Natural killer cell (primary cell): ENCODE measurements at regions of chr10 and their contacts with region 1.

Region 1: DNA sequence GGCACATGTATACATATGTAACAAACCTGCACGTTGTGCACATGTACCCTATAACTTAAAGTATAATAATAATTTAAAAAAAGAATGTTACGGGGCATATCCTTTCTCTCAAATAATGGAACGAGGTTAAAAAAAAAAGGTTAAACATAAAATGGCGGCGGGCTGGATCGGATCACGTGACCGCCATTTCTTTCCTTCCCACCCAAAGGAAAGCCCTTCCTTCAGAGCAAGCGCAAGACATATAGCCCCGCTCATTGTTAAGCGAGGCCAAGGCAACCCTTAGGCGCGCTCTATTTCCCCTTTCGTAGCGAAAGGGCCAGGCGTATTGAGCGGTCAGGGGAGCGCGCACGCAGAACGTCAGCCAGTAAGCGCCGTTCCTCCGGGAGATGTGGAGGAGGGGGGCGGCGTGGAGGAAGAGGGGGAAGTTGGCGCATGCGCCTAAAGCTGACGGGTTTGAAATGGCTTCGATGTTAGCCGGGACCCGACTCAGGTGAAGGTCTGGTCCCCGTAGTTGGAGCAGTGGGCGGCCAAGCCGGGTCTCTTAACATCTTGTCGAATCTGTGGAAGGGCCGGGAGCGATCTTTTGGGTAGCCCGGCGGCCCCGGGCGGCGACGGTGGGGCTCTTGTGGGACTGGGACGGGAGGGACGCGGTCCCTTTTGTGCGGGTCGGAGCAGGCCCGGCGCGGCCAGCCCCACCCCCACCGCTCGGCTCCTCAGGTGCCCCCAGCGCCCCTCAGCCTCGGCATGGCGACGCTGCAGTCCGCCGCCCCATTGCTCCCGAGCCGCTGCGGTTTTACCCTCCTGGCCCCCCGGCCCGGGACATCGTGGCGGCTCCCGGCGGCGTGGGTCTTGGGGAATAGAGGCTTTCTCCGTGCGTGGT is at the start of gene CCAR1:
- DNase-seq: peak; percentile 92 to 99
- ATAC-seq: peak; percentile 91 to 99 (median 95)
- H3K4me3 ChIP-seq: peak within 1 kb of the TSS; percentile 73
- H3K4me3 Mint-ChIP-seq: peak within 1 kb of the TSS; percentile 99
- H3K27ac ChIP-seq: peak within 1 kb of the TSS; percentile 97
- H3K27ac Mint-ChIP-seq: peak within 1 kb of the TSS; percentile 97 to 99
- H3K4me1 ChIP-seq: peaks cover 17% of the 10 kb centered on the region
- H3K4me1 Mint-ChIP-seq: peaks cover 10 to 18% of the 10 kb centered on the region in 2 donors
- H3K27me3 ChIP-seq: no peaks in the 10 kb centered on the region
- H3K27me3 Mint-ChIP-seq: no peaks in the 10 kb centered on the region
- CTCF ChIP-seq: no peak
- total RNA-seq, gene CCAR1: 73.7 to 84.1 (median 77.6) TPM

Region 2: GRCh38 chr10:68501691-68502090 is 219.3 kb before region 1 on chr10:
- intact Hi-C with region 1: no loop called
- DNase-seq: no peak
- ATAC-seq: no peak
- H3K4me3 ChIP-seq: no peak overlapping the region
- H3K4me3 Mint-ChIP-seq: no peak overlapping the region
- H3K27ac ChIP-seq: no peak overlapping the region
- H3K27ac Mint-ChIP-seq: no peak overlapping the region
- H3K4me1 ChIP-seq: no peaks in the 10 kb centered on the region
- H3K4me1 Mint-ChIP-seq: no peaks in the 10 kb centered on the region
- H3K27me3 ChIP-seq: no peaks in the 10 kb centered on the region
- H3K27me3 Mint-ChIP-seq: no peaks in the 10 kb centered on the region
- CTCF ChIP-seq: no peak

Region 3: GRCh38 chr10:68550747-68551411 is 170.2 kb before region 1 on chr10:
- intact Hi-C with region 1: loop called (anchors 2 kb)
- DNase-seq: peak in 1 of 2 donors; percentile 74
- ATAC-seq: peak; percentile 74 to 86 (median 81)
- H3K4me3 ChIP-seq: no peak overlapping the region
- H3K4me3 Mint-ChIP-seq: no peak overlapping the region
- H3K27ac ChIP-seq: no peak overlapping the region
- H3K27ac Mint-ChIP-seq: no peak overlapping the region
- H3K4me1 ChIP-seq: no peaks in the 10 kb centered on the region
- H3K4me1 Mint-ChIP-seq: no peaks in the 10 kb centered on the region
- H3K27me3 ChIP-seq: no peaks in the 10 kb centered on the region
- H3K27me3 Mint-ChIP-seq: no peaks in the 10 kb centered on the region
- CTCF ChIP-seq: peak; percentile 67

Region 4: DNA sequence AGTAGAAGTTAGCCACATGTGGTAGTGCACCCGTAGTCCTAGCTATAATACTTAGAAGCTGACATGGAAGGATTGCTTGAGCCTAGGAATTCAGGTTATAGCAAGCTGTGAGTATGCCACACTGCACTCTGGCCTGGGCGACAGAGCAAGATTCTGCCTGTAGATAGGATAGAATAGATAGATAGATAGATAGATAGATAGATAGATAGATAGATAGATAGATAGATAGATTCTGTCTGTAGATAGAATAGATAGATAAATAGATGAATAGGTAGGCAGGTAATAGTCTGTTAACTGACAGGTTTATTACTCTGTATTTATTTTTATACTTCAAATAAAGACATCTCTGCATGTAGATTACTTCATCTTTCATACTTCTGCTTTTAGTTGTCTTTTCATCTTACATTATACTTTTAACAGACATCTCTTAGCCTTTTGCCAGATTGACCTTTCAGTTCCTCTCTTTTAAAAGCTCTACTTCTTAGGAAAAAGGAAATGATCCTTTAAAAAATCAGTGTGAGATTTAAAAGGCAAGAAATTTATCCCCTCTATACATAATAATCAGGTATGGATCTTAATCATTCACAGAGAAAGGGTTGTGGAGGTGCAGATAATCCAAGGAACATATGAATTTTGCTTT is 31.8 kb after region 1 on chr10:
- intact Hi-C with region 1: no loop called
- DNase-seq: no peak
- ATAC-seq: no peak
- H3K4me3 ChIP-seq: no peak overlapping the region
- H3K4me3 Mint-ChIP-seq: no peak overlapping the region
- H3K27ac ChIP-seq: no peak overlapping the region
- H3K27ac Mint-ChIP-seq: peak overlapping the region in 1 of 2 donors; percentile 7
- H3K4me1 ChIP-seq: no peaks in the 10 kb centered on the region
- H3K4me1 Mint-ChIP-seq: peaks cover 0 to 5% of the 10 kb centered on the region in 2 donors
- H3K27me3 ChIP-seq: no peaks in the 10 kb centered on the region
- H3K27me3 Mint-ChIP-seq: no peaks in the 10 kb centered on the region
- CTCF ChIP-seq: no peak

Region 5: GRCh38 chr10:69262292-69262751 is 541.3 kb after region 1 on chr10:
- intact Hi-C with region 1: no loop called
- DNase-seq: no peak
- ATAC-seq: no peak
- H3K4me3 ChIP-seq: no peak overlapping the region
- H3K4me3 Mint-ChIP-seq: no peak overlapping the region
- H3K27ac ChIP-seq: no peak overlapping the region
- H3K27ac Mint-ChIP-seq: peak overlapping the region in 1 of 2 donors; percentile 48
- H3K4me1 ChIP-seq: no peaks in the 10 kb centered on the region
- H3K4me1 Mint-ChIP-seq: peaks cover 5 to 6% of the 10 kb centered on the region in 2 donors
- H3K27me3 ChIP-seq: no peaks in the 10 kb centered on the region
- H3K27me3 Mint-ChIP-seq: peaks cover 0 to 7% of the 10 kb centered on the region in 2 donors
- CTCF ChIP-seq: no peak